Astrocyte of the cerebellum (primary cell): ENCODE measurements at regions of chr16 and their contacts with region 1.

Region 1: GRCh38 chr16:14298381-14299119 is 227.4 kb downstream of the MRTFB start:
- DNase-seq: no peak
- H3K4me3 ChIP-seq: no peak overlapping the region
- CTCF ChIP-seq: no peak

Region 2: GRCh38 chr16:14378131-14378551 is 79.6 kb after region 1 on chr16:
- in situ Hi-C with region 1: no loop called
- DNase-seq: no peak
- H3K4me3 ChIP-seq: no peak overlapping the region
- CTCF ChIP-seq: no peak

Region 3: GRCh38 chr16:14509055-14509454 is 210.5 kb after region 1 on chr16:
- in situ Hi-C with region 1: loop called (anchors 5 kb)
- DNase-seq: no peak
- H3K4me3 ChIP-seq: no peak overlapping the region
- CTCF ChIP-seq: no peak